HepG2 (cell line): ENCODE measurements at regions of chr16 and their contacts with region 1.

Region 1: DNA sequence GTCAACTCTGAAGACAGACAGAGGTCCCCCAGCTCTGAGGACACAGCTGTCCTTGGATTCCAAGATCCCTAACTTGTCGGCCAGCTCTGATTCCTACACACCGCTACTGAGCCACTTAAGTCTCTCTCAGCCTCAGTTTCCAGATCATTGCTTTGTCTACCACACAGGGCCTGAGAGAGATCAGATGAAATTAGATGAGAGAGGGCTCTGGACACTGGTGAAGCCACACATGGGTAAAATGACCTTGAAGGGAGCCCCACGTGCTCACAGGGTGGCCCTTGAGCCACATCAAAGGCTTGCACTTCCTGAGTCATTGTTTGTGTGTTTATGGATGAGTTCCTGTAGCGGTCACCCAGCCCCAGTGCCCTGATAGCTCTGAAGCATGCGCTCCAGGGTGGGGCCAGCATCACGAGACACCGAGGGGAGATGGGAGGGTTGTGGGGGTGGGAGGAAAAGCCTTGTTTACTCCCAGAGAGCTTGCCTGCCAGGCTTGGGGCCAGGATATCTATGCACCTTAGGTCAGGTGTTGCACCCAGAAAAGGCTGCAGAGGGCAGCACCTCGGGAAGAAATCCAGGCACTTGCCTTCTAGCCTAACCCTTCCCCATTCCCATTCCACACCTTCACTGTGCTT is 32.7 kb upstream of the SLC6A2 start:
- DNase-seq: peak; percentile 100
- ATAC-seq: peak; percentile 99
- H3K4me3 ChIP-seq: no peak overlapping the region
- H3K27ac ChIP-seq: peak overlapping the region; percentile 79
- H3K4me1 ChIP-seq: peaks cover 40% of the 10 kb centered on the region
- H3K27me3 ChIP-seq: no peaks in the 10 kb centered on the region
- CTCF ChIP-seq: peak; percentile 88
- EP300 ChIP-seq: peak; percentile 95 to 99
- POLR2A ChIP-seq: no peak
- RAD21 ChIP-seq: peak; percentile 65

Region 2: GRCh38 chr16:55478827-55479429 is 144.1 kb before region 1 on chr16 and contains the start of gene MMP2:
- CTCF ChIA-PET with region 1: no interaction called
- POLR2A ChIA-PET with region 1: no interaction called
- in situ Hi-C with region 1: no loop called
- intact Hi-C with region 1: no loop called
- DNase-seq: no peak
- ATAC-seq: peak; percentile 58
- H3K4me3 ChIP-seq: peak within 1 kb of the TSS; percentile 31 to 66 (median 42); a peak in 5 of 6 replicates
- H3K27ac ChIP-seq: no peak within 1 kb of the TSS
- H3K4me1 ChIP-seq: peaks cover 15% of the 10 kb centered on the region
- H3K27me3 ChIP-seq: peaks cover 4 to 42% of the 10 kb centered on the region in 2 experiments; a peak in 4 of 5 replicates
- CTCF ChIP-seq: no peak
- EP300 ChIP-seq: no peak
- POLR2A ChIP-seq: no peak
- RAD21 ChIP-seq: no peak
- total RNA-seq, gene MMP2: 0.29 and 0.31 TPM in 2 replicates

Region 3: GRCh38 chr16:55508941-55509931 is 113.8 kb before region 1 on chr16 and contains the start of gene LPCAT2:
- CTCF ChIA-PET with region 1: no interaction called
- POLR2A ChIA-PET with region 1: interaction called, 3 read pairs
- in situ Hi-C with region 1: no loop called
- intact Hi-C with region 1: loop called (anchors 5 kb)
- DNase-seq: peak; percentile 76
- ATAC-seq: peak; percentile 91
- H3K4me3 ChIP-seq: peak within 1 kb of the TSS; percentile 69 to 88 (median 76)
- H3K27ac ChIP-seq: no peak within 1 kb of the TSS
- H3K4me1 ChIP-seq: peaks cover 47% of the 10 kb centered on the region
- H3K27me3 ChIP-seq: no peaks in the 10 kb centered on the region
- CTCF ChIP-seq: peak; percentile 11; the same call in 1 of the 2 replicates
- EP300 ChIP-seq: no peak
- POLR2A ChIP-seq: peak; percentile 43 to 82; a peak in 3 of 4 replicates
- RAD21 ChIP-seq: peak; percentile 23; the same call in 1 of the 2 replicates
- total RNA-seq, gene LPCAT2: 7.7 and 9.9 TPM in 2 replicates

Region 4: DNA sequence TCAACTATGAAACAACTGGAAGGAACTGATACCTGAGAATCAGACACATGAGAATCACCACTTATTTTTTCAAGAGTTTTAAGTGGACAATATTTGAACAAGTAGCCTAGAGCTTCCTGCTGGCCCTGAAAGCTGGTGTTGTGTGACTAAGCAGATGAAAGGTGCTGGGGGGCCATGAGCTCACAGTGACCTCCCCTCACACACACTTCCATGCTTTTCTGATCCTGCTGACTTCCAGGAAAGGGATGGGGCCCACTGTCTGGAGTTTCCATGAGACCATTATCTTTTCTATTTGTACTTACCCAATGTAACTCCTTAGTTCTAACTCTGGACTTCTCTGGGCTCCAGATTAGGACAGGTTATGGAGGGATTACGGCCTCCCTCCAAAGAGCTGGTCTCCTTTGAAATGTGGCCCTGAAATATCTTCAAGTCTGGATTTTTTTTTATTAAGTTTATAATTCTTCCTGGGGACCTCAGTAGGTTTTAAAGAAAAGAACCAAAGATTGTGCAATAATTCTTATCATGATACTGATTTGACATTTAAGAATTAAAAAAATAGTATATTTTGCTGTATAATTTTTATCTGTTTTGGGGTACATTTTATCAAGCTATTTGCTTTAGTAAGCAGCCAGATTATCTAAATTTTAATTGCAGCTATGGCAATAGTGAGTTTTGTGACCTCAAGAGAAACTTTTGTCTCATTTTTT is 51.7 kb before region 1 on chr16:
- CTCF ChIA-PET with region 1: no interaction called
- POLR2A ChIA-PET with region 1: interaction called, 3 read pairs
- in situ Hi-C with region 1: no loop called
- intact Hi-C with region 1: loop called (anchors 2 kb)
- DNase-seq: peak; percentile 90
- ATAC-seq: peak; percentile 81
- H3K4me3 ChIP-seq: no peak overlapping the region
- H3K27ac ChIP-seq: peak overlapping the region; percentile 23
- H3K4me1 ChIP-seq: peaks cover 21% of the 10 kb centered on the region
- H3K27me3 ChIP-seq: no peaks in the 10 kb centered on the region
- CTCF ChIP-seq: no peak
- EP300 ChIP-seq: peak in 1 of 2 experiments; percentile 79; a peak in 2 of 4 replicates
- POLR2A ChIP-seq: no peak
- RAD21 ChIP-seq: no peak

Region 5: DNA sequence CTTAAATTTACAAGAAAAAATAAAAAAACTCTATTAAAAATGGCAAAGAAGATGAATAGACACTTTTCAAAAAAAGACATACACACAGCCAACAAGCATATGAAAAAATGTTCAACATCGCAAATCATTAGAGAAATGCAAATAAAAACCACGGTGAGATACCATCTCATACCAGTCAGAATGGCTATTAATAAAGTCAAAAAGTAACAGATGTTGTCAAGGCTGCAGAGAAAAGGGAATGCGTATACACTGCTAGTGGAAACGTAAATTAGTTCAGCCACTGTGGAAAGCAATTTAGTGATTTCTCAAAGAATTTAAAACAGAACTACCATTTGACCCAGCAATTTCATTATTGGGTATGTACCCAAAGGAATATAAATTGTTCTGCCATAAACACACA is 25.1 kb before region 1 on chr16:
- CTCF ChIA-PET with region 1: no interaction called
- POLR2A ChIA-PET with region 1: no interaction called
- in situ Hi-C with region 1: no loop called
- intact Hi-C with region 1: no loop called
- DNase-seq: no peak
- ATAC-seq: no peak
- H3K4me3 ChIP-seq: no peak overlapping the region
- H3K27ac ChIP-seq: no peak overlapping the region
- H3K4me1 ChIP-seq: no peaks in the 10 kb centered on the region
- H3K27me3 ChIP-seq: no peaks in the 10 kb centered on the region
- CTCF ChIP-seq: no peak
- EP300 ChIP-seq: no peak
- POLR2A ChIP-seq: no peak
- RAD21 ChIP-seq: no peak

Region 6: DNA sequence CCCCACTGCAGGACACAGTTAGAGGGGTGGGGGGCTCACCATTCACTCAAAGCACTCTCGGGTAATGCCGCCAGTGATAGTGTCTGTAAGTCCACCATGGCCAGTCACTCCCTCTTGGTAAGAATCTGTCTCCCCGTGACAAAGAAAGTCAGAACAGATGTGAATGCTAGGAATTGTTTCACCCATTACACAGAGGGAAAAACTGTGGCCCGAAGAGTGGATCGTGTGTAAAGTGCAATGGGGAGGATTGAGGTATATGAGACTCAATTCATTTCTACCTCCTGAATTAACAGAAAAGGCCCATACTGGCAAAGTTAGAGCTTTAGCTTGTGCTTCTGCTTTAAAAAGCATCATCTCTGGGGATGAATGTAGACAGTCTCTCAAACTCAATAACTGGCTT is 15.2 kb after region 1 on chr16:
- CTCF ChIA-PET with region 1: interaction called, 18 read pairs
- POLR2A ChIA-PET with region 1: interaction called, 56 read pairs
- in situ Hi-C with region 1: no loop called
- intact Hi-C with region 1: loop called (anchors 1 kb)
- DNase-seq: no peak
- ATAC-seq: no peak
- H3K4me3 ChIP-seq: no peak overlapping the region
- H3K27ac ChIP-seq: no peak overlapping the region
- H3K4me1 ChIP-seq: peaks cover 78% of the 10 kb centered on the region
- H3K27me3 ChIP-seq: no peaks in the 10 kb centered on the region
- CTCF ChIP-seq: no peak
- EP300 ChIP-seq: no peak
- POLR2A ChIP-seq: no peak
- RAD21 ChIP-seq: no peak

Region 7: GRCh38 chr16:55643161-55643970 is 20.3 kb after region 1 on chr16:
- CTCF ChIA-PET with region 1: interaction called, 18 read pairs
- POLR2A ChIA-PET with region 1: interaction called, 56 read pairs
- in situ Hi-C with region 1: no loop called
- intact Hi-C with region 1: no loop called
- DNase-seq: peak; percentile 59
- ATAC-seq: peak; percentile 98
- H3K4me3 ChIP-seq: no peak overlapping the region
- H3K27ac ChIP-seq: no peak overlapping the region
- H3K4me1 ChIP-seq: peaks cover 39% of the 10 kb centered on the region
- H3K27me3 ChIP-seq: no peaks in the 10 kb centered on the region
- CTCF ChIP-seq: peak; percentile 82
- EP300 ChIP-seq: no peak
- POLR2A ChIP-seq: no peak
- RAD21 ChIP-seq: peak; percentile 79

Region 8: DNA sequence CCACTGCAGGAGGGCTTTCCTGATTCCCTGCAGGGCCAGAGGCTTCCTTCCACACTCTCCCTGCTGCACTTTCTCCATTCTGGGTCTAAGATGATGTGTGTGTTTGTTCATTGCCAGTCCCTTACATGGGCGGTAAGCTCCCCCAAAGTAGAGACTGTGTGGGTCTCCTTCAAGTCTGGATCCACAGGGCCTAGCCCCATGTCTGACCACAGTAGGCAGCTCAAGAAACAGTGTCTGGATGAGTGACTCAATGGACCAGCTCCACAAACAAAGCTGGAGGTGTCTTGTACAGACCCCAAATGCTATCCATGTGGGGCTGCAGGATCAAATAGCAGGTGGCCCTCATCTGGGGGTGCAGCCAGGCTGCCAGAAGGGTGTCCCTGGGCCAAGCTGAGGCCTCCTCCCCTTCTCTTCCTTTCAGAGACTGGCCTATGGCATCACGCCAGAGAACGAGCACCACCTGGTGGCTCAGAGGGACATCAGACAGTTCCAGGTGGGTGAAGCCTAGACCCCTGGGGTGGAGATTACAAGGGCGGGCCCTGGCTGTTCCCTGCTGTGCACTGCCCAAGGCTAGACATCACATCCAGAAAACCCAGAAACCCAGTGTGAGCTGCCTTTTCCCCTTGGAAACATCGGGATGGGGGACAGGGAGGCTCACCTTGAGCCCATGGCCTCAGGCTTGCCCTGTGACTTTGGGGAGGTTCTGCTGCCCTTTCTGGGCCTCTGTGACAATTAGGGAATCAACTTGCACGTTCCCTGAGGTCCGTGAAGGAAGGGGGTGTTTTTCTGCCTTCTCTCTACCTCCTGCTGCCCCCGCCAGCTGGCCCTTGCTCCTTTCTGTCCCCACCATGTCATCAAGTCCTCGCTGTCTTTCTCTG is 78.6 kb after region 1 on chr16:
- CTCF ChIA-PET with region 1: interaction called, 22 read pairs
- POLR2A ChIA-PET with region 1: interaction called, 5 read pairs
- in situ Hi-C with region 1: no loop called
- intact Hi-C with region 1: loop called (anchors 1 kb)
- DNase-seq: peak; percentile 73
- ATAC-seq: peak; percentile 97
- H3K4me3 ChIP-seq: no peak overlapping the region
- H3K27ac ChIP-seq: no peak overlapping the region
- H3K4me1 ChIP-seq: 0 out of 2 replicates have a peak, but pooled peaks cover 6% of the 10 kb centered on the region
- H3K27me3 ChIP-seq: peaks cover 0 to 2% of the 10 kb centered on the region in 2 experiments; a peak in 1 of 5 replicates
- CTCF ChIP-seq: peak; percentile 98
- EP300 ChIP-seq: no peak
- POLR2A ChIP-seq: no peak
- RAD21 ChIP-seq: peak; percentile 90

Region 9: GRCh38 chr16:55832758-55833540 is 209.9 kb after region 1 on chr16 and contains the start of gene CES1:
- CTCF ChIA-PET with region 1: no interaction called
- POLR2A ChIA-PET with region 1: no interaction called
- in situ Hi-C with region 1: no loop called
- intact Hi-C with region 1: loop called (anchors 5 kb)
- DNase-seq: peak; percentile 94
- ATAC-seq: peak; percentile 92
- H3K4me3 ChIP-seq: peak within 1 kb of the TSS; percentile 69 to 77 (median 74)
- H3K27ac ChIP-seq: peak within 1 kb of the TSS; percentile 80
- H3K4me1 ChIP-seq: peaks cover 54% of the 10 kb centered on the region
- H3K27me3 ChIP-seq: no peaks in the 10 kb centered on the region
- CTCF ChIP-seq: no peak
- EP300 ChIP-seq: peak in 1 of 2 experiments; percentile 82; a peak in 2 of 4 replicates
- POLR2A ChIP-seq: peak; percentile 76 to 88
- RAD21 ChIP-seq: 0 out of 2 replicates have a peak, but pooled peaks have one; percentile 19
- total RNA-seq, gene CES1: 82.8 and 198 TPM in 2 replicates